ENCODE measurements at regions of chr4 and their contacts with region 1.

Region 1: GRCh38 chr4:48109413-48110263 is 24.4 kb downstream of the TXK start:
- DNase-seq: no peak
- H3K4me3 Mint-ChIP-seq: no peak overlapping the region
- H3K27ac Mint-ChIP-seq: peak overlapping the region; percentile 75
- H3K4me1 Mint-ChIP-seq: peaks cover 63% of the 10 kb centered on the region
- H3K27me3 Mint-ChIP-seq: no peaks in the 10 kb centered on the region

Region 2: DNA sequence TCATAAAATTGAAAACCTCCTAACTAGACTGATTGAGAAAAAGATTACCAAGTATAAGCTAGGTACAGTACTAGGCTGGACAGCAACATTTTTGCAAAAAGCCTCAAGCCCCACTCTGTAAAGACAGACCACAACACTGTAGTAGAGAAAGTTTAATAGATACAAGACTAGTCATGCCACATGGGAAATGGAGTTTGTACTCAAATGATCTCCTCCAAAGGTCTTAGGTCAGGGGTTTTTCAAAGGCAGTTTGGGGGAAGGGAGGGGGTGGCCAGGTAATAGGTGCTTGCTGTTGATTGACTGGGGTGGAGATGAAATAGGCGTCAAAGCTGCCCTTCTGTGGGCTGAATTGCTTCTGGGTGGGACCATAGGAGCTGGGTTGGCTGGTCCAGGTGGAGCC is 107.4 kb before region 1 on chr4:
- CTCF ChIA-PET with region 1: interaction called, 11 read pairs
- intact Hi-C with region 1: loop called (anchors 1 kb)
- DNase-seq: no peak
- H3K4me3 Mint-ChIP-seq: no peak overlapping the region
- H3K27ac Mint-ChIP-seq: no peak overlapping the region
- H3K4me1 Mint-ChIP-seq: no peaks in the 10 kb centered on the region
- H3K27me3 Mint-ChIP-seq: no peaks in the 10 kb centered on the region

Region 3: GRCh38 chr4:48008021-48008596 is 101.5 kb before region 1 on chr4:
- CTCF ChIA-PET with region 1: interaction called, 6 read pairs
- intact Hi-C with region 1: loop called (anchors 1 kb)
- DNase-seq: no peak
- H3K4me3 Mint-ChIP-seq: no peak overlapping the region
- H3K27ac Mint-ChIP-seq: no peak overlapping the region
- H3K4me1 Mint-ChIP-seq: no peaks in the 10 kb centered on the region
- H3K27me3 Mint-ChIP-seq: no peaks in the 10 kb centered on the region

Region 4: GRCh38 chr4:48065587-48066052 is 44.0 kb before region 1 on chr4:
- CTCF ChIA-PET with region 1: interaction called, 8 read pairs
- intact Hi-C with region 1: loop called (anchors 1 kb)
- DNase-seq: peak; percentile 48
- H3K4me3 Mint-ChIP-seq: no peak overlapping the region
- H3K27ac Mint-ChIP-seq: peak overlapping the region; percentile 44
- H3K4me1 Mint-ChIP-seq: peaks cover 36% of the 10 kb centered on the region
- H3K27me3 Mint-ChIP-seq: no peaks in the 10 kb centered on the region

Region 5: DNA sequence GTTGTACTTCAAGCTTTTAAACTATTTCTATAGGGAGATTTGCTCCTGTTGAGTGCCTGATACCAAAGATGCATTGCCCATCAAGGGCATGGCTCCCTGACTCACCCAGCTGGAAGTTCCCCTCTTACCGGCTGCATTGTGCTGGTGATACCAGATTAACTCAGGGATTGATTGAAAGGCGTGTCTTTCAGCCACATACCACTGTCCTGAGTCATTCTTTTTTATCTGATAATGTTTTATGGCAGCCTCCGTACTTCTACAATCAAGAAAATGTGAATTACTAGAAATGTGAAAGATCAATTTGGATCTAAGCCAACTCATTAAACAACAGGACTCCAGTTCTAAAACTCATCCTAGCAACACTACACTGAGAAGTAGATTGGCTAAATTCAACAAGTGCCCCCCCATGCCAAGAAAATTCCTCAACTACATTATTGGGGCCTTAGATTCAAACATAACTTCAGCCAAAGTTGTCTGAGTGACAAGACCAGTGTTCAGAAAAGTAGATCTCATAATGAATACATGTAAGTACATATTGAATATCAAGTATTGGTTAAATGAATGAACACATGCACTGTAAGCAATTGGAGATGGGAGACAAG is 15.6 kb before region 1 on chr4:
- CTCF ChIA-PET with region 1: interaction called, 28 read pairs
- intact Hi-C with region 1: no loop called
- DNase-seq: peak; percentile 78
- H3K4me3 Mint-ChIP-seq: no peak overlapping the region
- H3K27ac Mint-ChIP-seq: peak overlapping the region; percentile 61
- H3K4me1 Mint-ChIP-seq: peaks cover 21% of the 10 kb centered on the region
- H3K27me3 Mint-ChIP-seq: no peaks in the 10 kb centered on the region

Region 6: GRCh38 chr4:48133669-48134068 is 24.0 kb after region 1 on chr4:
- CTCF ChIA-PET with region 1: interaction called, 33 read pairs
- intact Hi-C with region 1: no loop called
- DNase-seq: no peak
- H3K4me3 Mint-ChIP-seq: peak overlapping the region; percentile 79
- H3K27ac Mint-ChIP-seq: peak overlapping the region; percentile 99
- H3K4me1 Mint-ChIP-seq: peaks cover 69% of the 10 kb centered on the region
- H3K27me3 Mint-ChIP-seq: no peaks in the 10 kb centered on the region

Region 7: DNA sequence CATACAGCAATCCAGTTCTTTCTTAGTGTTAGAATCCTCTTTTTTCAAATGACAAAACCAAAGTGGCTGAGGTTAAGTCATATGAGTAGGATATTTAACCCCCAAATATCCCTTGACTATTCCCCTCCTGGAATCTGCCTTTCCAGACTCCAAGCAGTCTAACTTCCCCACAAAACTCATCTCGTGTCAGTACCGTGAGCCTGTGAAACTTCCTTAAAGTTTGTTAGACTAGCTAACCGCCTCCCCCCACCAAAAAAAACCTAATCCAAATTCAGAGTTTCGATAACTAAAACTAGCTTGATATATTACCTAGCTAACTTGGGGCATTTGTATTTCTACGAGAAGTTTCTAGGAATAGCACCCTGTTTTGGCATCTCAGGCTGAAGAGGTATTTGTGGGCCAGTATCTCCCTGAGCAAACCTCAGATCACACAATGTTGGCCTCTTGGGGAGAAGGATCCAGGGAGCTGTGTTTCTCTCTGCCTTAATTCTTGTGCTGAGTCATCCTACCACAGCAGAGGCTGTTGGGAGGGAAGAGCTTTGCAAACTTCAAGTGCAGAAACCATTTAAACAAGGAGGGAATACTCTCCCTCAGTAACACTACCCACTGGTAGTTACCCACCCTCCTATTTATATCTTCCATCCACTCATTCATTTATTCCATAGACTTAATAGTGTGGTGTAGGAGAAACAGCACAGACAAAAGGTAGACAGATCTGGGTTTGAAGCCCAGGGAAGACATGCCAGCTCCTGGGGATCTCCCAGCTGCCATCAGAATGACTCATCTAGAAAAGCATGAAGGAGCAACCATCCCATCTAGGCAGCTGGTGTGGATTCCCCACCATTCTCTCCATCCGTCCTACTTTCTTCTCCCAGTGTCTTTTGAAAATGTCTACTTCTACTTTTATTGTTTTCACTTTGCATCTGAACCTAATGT is 63.7 kb after region 1 on chr4:
- CTCF ChIA-PET with region 1: interaction called, 3 read pairs
- intact Hi-C with region 1: loop called (anchors 10 kb)
- DNase-seq: peak; percentile 27
- H3K4me3 Mint-ChIP-seq: no peak overlapping the region
- H3K27ac Mint-ChIP-seq: no peak overlapping the region
- H3K4me1 Mint-ChIP-seq: peaks cover 20% of the 10 kb centered on the region
- H3K27me3 Mint-ChIP-seq: no peaks in the 10 kb centered on the region